Caco-2 (cell line): ENCODE measurements at regions of chr13 and their contacts with region 1.

Region 1: GRCh38 chr13:113448885-113449692 is 4.2 kb downstream of the ADPRHL1 start:
- DNase-seq: peak; percentile 91 to 96
- H3K4me3 ChIP-seq: peak overlapping the region; percentile 44
- H3K4me3 Mint-ChIP-seq: peak overlapping the region; percentile 84
- H3K27ac Mint-ChIP-seq: peak overlapping the region; percentile 92
- H3K4me1 ChIP-seq: peaks cover 9% of the 10 kb centered on the region
- H3K4me1 Mint-ChIP-seq: peaks cover 6% of the 10 kb centered on the region
- H3K27me3 ChIP-seq: no peaks in the 10 kb centered on the region
- H3K27me3 Mint-ChIP-seq: no peaks in the 10 kb centered on the region
- CTCF ChIP-seq: no peak

Region 2: DNA sequence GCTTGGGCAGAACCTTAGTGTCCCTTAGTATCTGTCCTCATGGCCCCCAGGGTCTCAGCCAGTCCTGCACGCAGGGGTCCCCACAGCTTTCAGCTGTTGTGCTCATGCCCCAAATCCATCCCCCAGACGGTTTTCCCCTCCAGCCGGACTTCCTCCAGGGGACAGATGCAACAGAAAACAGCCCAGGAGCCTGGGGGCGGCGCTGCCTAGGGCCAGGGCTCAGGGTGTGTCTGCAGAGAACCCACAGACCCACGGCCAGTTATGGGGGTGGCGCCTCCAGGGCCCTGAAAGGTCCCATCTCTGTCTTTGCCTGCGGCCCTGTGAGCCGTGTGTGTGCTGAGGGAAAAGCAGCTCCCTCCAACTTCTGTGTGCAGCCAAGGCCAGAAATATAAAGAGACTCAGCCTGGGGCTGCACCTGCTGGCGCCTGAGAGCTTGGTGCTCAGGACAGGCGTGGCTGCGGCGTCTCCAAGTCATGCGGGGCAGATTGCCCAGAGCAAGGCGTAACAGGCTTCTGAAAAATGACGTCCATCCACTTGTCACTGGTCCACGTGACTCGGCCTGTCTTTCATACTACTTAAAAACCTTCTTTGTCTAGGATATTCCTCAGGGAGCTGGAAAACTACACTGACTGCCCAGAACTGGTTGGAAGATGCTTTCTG is 365.6 kb before region 1 on chr13:
- CTCF ChIA-PET with region 1: no interaction called
- POLR2A ChIA-PET with region 1: no interaction called
- intact Hi-C with region 1: no loop called
- DNase-seq: no peak
- H3K4me3 ChIP-seq: no peak overlapping the region
- H3K4me3 Mint-ChIP-seq: no peak overlapping the region
- H3K27ac Mint-ChIP-seq: no peak overlapping the region
- H3K4me1 ChIP-seq: 0 out of 2 replicates have a peak, but pooled peaks cover 8% of the 10 kb centered on the region
- H3K4me1 Mint-ChIP-seq: no peaks in the 10 kb centered on the region
- H3K27me3 ChIP-seq: no peaks in the 10 kb centered on the region
- H3K27me3 Mint-ChIP-seq: no peaks in the 10 kb centered on the region
- CTCF ChIP-seq: no peak

Region 3: DNA sequence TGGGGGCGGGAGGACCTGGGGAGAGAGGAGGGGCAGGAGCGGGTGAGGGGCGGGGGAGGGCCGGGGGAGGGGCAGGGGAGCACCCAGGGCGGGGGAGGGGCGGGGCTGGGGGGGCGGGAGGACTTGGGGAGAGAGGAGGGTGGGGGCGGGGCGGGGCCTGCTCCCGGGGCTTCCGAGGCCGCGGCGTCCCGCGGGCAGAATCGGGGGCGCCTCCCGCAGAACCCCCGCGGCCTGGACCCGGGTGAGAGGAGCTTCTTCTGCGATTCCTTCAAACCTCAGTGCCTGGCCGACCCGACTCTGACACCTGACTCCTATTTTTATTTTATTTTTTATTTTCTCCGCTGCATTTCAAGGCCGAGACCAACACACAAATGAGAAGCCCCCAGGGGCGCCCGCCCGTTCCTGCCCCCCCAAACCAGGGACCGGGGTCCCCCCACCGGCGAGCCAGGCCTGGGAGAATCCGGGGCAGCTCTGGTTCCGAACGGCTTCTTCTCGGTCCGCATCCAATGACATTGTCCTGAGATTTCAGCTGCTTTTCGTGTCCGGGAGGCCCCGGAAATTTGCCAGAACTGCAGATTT is 84.7 kb before region 1 on chr13:
- CTCF ChIA-PET with region 1: no interaction called
- POLR2A ChIA-PET with region 1: no interaction called
- intact Hi-C with region 1: loop called (anchors 1 kb)
- DNase-seq: no peak
- H3K4me3 ChIP-seq: no peak overlapping the region
- H3K4me3 Mint-ChIP-seq: no peak overlapping the region
- H3K27ac Mint-ChIP-seq: no peak overlapping the region
- H3K4me1 ChIP-seq: no peaks in the 10 kb centered on the region
- H3K4me1 Mint-ChIP-seq: peaks cover 8% of the 10 kb centered on the region
- H3K27me3 ChIP-seq: no peaks in the 10 kb centered on the region
- H3K27me3 Mint-ChIP-seq: no peaks in the 10 kb centered on the region
- CTCF ChIP-seq: no peak

Region 4: DNA sequence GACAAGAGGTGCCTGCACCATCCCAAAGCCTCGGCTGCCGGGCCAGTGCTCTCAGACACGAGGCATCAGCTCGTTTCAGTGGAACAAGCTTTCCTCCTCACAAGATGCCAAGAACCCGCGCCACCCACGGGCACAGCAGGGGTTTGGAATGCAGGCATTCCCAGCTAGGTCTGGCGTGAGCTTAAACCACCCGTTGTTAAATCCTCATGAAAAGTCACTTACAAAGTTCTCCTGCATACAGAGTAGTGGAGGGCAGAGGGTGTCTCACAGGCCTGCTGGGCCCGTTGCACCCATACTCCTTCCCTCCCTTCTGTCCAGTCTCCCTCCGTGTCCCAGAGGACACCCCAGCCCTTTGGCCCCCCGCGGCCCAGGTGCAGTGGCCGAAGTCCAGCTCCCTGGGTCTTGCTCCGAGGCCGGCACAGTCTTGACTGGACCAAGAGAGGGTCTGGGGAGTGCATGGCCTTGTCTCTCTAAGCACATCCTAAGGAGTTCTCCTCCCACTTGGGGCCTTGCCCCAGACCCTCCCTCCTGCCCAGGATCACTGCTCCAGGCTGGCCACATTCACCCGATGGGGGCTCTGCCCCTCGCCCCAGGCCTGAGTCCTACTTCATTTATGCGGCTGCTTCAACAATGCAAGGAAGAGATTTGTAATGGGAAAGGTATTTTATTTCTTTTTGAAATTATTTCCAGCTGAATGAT is 50.0 kb before region 1 on chr13:
- CTCF ChIA-PET with region 1: no interaction called
- POLR2A ChIA-PET with region 1: no interaction called
- intact Hi-C with region 1: loop called (anchors 1 kb)
- DNase-seq: peak in 1 of 2 experiments; percentile 32
- H3K4me3 ChIP-seq: no peak overlapping the region
- H3K4me3 Mint-ChIP-seq: no peak overlapping the region
- H3K27ac Mint-ChIP-seq: peak overlapping the region; percentile 78
- H3K4me1 ChIP-seq: peaks cover 38% of the 10 kb centered on the region
- H3K4me1 Mint-ChIP-seq: peaks cover 10% of the 10 kb centered on the region
- H3K27me3 ChIP-seq: no peaks in the 10 kb centered on the region
- H3K27me3 Mint-ChIP-seq: no peaks in the 10 kb centered on the region
- CTCF ChIP-seq: no peak

Region 5: GRCh38 chr13:113405481-113406300 is 43.4 kb before region 1 on chr13:
- CTCF ChIA-PET with region 1: interaction called, 4 read pairs
- POLR2A ChIA-PET with region 1: no interaction called
- intact Hi-C with region 1: loop called (anchors 2 kb)
- DNase-seq: peak; percentile 42 to 48
- H3K4me3 ChIP-seq: peak overlapping the region; percentile 33
- H3K4me3 Mint-ChIP-seq: peak overlapping the region; percentile 37
- H3K27ac Mint-ChIP-seq: no peak overlapping the region
- H3K4me1 ChIP-seq: peaks cover under 1% of the 10 kb centered on the region
- H3K4me1 Mint-ChIP-seq: no peaks in the 10 kb centered on the region
- H3K27me3 ChIP-seq: no peaks in the 10 kb centered on the region
- H3K27me3 Mint-ChIP-seq: no peaks in the 10 kb centered on the region
- CTCF ChIP-seq: peak in 1 of 2 experiments; percentile 18